ENCODE measurements at regions of chr5 and their contacts with region 1.

Region 1: DNA sequence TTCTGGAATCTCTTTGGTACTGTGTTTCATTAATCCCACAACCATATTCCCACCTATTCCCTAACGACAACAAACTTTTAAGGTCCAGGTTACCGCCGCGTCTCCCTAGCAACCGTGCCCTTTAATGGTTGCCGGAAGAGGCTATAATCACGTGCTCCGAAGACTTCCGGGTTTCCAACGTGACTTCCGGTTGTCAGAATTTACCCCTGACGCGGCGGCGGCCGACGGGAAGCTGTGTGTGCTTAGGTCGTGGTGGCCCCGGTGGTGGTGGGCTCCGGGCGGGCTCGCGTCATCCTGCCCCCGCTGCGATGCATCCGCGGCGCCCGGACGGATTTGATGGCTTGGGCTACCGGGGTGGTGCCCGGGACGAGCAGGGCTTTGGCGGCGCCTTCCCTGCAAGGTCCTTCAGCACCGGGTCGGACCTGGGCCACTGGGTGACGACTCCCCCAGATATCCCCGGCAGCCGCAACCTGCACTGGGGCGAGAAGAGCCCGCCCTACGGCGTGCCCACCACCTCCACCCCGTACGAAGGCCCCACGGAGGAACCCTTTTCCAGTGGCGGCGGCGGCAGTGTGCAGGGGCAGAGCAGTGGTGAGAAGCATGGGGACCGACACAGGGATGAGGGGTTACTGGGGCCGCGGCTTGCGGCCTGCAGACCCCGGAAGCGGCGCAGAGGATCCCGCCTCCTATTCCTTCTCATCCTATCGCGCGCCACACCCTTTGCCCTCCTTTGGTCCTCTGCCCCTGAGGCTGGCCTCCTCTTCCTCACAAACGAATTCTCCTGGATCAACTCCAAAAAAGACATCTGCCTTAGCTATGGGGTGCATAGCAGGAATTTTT is at the start of gene SLC25A46:
- DNase-seq: peak; percentile 70 to 81
- ATAC-seq: peak; percentile 99 to 100
- H3K4me3 ChIP-seq: peak within 1 kb of the TSS; percentile 83 to 100 (median 95)
- H3K27ac ChIP-seq: peak within 1 kb of the TSS; percentile 88 to 93 (median 91)
- H3K4me1 ChIP-seq: peaks cover 10 to 16% of the 10 kb centered on the region in 2 donors
- H3K27me3 ChIP-seq: peaks cover 0 to 2% (median 0%) of the 10 kb centered on the region in 3 donors
- CTCF ChIP-seq: no peak
- POLR2A ChIP-seq: peak; percentile 46 to 60
- total RNA-seq, gene SLC25A46: 71.5 to 114 (median 99.7) TPM

Region 2: DNA sequence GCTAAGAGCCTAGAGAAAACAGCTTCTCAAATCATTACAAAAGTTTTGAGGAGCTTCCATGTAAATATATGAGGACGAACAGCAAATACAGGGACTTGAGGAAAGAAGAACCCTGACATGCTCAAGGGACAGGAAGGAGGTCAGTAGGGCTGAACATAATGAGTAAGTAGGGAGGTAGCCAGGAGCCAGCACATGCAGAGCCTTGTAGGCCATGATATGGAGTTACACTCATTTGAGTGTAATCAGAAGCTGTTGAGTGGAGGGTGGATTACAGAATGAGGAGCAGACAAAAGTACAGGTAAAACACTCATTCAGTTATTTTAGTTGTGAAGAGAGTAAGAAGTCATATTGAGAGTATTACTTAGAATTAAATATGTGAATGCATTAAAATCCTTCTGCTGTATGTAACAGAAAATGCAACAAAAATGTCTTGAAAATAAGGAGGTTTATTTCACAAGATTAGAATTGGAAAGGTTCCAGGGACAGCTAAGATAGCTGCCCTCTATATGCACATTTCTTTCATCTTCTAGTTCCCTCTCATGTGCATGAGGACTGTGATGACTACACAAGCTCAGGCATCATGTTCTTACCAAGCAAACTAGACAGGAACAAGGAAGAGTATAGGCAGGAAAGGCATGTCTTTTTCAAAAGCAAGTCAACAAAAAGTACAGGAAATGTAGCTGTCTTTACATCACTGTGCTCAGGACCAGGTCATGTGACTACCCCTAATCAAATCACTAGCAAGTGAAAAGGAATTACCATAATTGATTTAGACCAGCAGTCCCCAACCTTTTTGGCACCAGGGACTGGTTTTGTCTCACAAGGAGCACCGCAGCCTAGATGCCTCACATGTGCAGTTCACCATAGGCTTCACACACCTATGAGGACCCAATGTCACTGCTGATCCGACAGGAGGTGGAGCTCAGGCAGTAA is 99.8 kb before region 1 on chr5:
- in situ Hi-C with region 1: no loop called
- intact Hi-C with region 1: no loop called
- DNase-seq: no peak
- ATAC-seq: no peak
- H3K4me3 ChIP-seq: no peak overlapping the region
- H3K27ac ChIP-seq: no peak overlapping the region
- H3K4me1 ChIP-seq: no peaks in the 10 kb centered on the region
- H3K27me3 ChIP-seq: no peaks in the 10 kb centered on the region
- CTCF ChIP-seq: no peak
- POLR2A ChIP-seq: no peak

Region 3: GRCh38 chr5:111092062-111092853 is 353.2 kb after region 1 on chr5 and contains the start of gene WDR36:
- in situ Hi-C with region 1: loop called in 1 of 4 experiments (anchors 25 kb)
- intact Hi-C with region 1: loop called (anchors 2 kb)
- DNase-seq: peak; percentile 75 to 82
- ATAC-seq: peak; percentile 99 to 100
- H3K4me3 ChIP-seq: peak within 1 kb of the TSS; percentile 87 to 97 (median 94)
- H3K27ac ChIP-seq: peak within 1 kb of the TSS; percentile 87 to 91 (median 90)
- H3K4me1 ChIP-seq: peaks cover 19 to 24% of the 10 kb centered on the region in 2 donors
- H3K27me3 ChIP-seq: no peaks in the 10 kb centered on the region
- CTCF ChIP-seq: no peak
- POLR2A ChIP-seq: peak; percentile 31 to 40
- total RNA-seq, gene WDR36: 13.6 to 28.2 (median 22.3) TPM

Region 4: DNA sequence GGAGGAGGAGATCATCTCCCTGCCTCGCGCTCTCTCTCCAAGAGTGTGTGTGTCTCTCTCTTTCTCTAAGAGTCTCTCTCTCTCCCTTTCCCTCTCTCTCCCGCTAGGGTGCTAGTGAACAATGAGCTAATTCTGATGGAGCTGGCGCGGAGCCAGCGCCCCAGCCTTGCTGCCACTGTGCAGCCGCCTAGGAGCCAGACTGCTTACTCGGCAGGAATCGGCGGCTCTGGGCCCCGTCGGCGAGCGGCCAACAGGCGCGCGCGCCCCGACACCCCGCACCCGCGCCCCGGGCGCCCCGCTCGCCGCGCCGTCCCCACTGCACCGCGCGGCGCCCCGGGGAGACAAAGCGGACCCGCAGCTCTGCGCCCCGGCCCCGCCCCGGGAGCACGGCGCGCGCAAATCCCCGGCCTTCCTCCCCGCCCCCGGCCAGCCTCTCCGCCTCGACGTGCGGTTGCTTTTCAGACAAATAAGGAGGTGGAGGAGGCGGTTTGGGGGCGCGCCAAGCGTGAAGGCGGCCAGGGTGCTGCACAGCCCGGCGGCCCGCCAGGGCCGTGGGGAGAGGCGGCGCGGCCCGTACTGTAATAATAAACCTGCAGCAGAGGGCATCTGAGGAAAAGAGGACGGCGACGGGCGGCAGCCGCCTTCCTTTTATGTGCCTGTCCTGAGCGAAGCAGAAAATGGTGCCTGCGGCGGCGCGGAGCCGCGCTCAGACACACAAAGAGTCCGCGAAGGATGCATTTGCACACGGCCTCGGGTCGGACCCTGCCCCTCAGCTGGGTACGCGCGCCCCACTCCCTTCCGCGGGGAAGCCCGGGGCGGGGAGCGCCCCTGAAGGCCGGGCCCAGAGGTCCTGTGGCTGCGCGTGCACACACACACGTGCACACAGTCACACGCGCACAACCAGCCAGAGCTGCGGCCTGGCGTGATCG is 1018.6 kb after region 1 on chr5:
- in situ Hi-C with region 1: no loop called
- intact Hi-C with region 1: loop called (anchors 5 kb)
- DNase-seq: peak; percentile 90 to 95
- ATAC-seq: peak; percentile 72 to 76
- H3K4me3 ChIP-seq: peak overlapping the region; percentile 49 to 75 (median 64)
- H3K27ac ChIP-seq: peak overlapping the region; percentile 74 to 94 (median 90)
- H3K4me1 ChIP-seq: peaks cover 37 to 43% of the 10 kb centered on the region in 2 donors
- H3K27me3 ChIP-seq: no peaks in the 10 kb centered on the region
- CTCF ChIP-seq: peak; percentile 16 to 39 (median 30)
- POLR2A ChIP-seq: peak; percentile 56 to 82